ENCODE measurements at regions of chr7 and their contacts with region 1.

Region 1: GRCh38 chr7:1569833-1570633 is at the start of gene PSMG3:
- DNase-seq: peak; percentile 88
- ATAC-seq: peak; percentile 61
- H3K4me3 ChIP-seq: peak within 1 kb of the TSS; percentile 75
- H3K27ac ChIP-seq: peak within 1 kb of the TSS; percentile 99
- H3K4me1 ChIP-seq: peaks cover 42% of the 10 kb centered on the region
- H3K27me3 ChIP-seq: no peaks in the 10 kb centered on the region
- CTCF ChIP-seq: peak; percentile 31; the same call in 1 of the 2 replicates
- total RNA-seq, gene PSMG3: 133 and 171 TPM in 2 replicates

Region 2: DNA sequence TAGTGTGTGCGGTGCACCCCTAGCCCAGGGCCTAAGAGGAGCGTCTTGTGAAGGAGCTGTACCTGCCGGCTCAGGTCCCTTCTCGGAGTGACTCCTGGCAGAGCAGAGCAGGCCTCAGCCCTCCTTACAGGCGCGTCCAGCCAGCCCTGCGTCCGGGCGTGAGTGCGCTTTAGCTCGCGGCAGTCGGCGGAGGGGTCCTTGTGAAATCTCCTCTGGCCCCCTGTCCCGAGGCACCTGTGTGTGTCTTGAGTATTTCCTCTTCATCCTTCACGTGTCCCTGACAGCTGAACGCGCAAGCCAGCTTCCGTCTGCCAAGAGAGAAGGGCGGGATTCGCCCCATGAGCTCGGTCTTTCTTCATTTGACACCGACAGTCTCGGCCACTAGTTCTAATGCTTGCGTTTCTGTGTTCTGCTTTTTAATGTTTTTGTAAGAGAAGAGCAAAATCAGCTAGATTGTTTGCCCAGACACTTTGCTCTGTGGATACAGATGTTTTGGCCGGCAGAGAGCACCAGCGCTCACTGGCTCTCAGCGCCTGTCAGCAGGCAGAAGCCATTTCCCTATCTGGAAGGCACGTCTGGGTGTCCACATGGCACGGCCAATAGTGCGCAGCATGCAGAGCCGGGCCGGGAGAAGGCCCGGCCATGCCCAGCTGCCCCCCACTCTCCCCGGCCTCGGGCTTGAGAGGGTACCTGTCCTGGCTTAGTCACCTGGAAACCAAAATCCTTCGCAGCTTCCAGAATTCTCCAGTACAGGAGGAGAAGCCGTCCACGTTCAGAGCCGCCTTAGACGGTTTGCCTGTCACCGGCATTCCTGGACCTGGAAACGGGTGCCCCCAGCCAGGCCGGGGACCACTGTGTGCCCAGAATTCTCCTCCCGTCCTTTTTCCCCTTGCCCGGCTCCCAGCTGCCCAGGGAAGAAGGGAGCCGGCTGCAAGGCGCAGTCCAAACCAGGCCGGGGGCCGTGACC is 686.7 kb before region 1 on chr7:
- CTCF ChIA-PET with region 1: no interaction called
- POLR2A ChIA-PET with region 1: no interaction called
- intact Hi-C with region 1: no loop called
- DNase-seq: no peak
- ATAC-seq: no peak
- H3K4me3 ChIP-seq: no peak overlapping the region
- H3K27ac ChIP-seq: no peak overlapping the region
- H3K4me1 ChIP-seq: peaks cover 15% of the 10 kb centered on the region
- H3K27me3 ChIP-seq: no peaks in the 10 kb centered on the region
- CTCF ChIP-seq: no peak

Region 3: DNA sequence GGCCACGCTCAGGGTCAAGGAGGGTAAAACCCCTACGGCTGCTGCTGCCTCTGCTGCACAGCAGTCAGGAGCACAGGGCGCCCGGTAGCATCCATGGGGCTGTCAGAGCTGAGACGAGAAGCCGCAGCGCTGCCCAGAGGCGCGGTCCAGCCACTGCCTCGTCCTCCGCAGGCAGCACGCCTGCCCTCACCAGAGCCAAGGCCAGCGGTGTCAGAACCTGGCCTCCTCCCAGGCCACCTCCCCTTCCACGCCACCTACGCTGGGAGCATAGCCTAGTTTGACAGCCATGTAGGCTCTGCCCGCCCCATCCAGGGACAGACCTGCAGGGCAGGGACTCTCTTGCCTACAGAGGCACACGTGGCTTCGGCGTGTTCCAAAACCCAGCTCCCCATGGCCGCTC is 82.0 kb before region 1 on chr7:
- CTCF ChIA-PET with region 1: no interaction called
- POLR2A ChIA-PET with region 1: no interaction called
- intact Hi-C with region 1: no loop called
- DNase-seq: no peak
- ATAC-seq: no peak
- H3K4me3 ChIP-seq: no peak overlapping the region
- H3K27ac ChIP-seq: no peak overlapping the region
- H3K4me1 ChIP-seq: no peaks in the 10 kb centered on the region
- H3K27me3 ChIP-seq: no peaks in the 10 kb centered on the region
- CTCF ChIP-seq: no peak

Region 4: DNA sequence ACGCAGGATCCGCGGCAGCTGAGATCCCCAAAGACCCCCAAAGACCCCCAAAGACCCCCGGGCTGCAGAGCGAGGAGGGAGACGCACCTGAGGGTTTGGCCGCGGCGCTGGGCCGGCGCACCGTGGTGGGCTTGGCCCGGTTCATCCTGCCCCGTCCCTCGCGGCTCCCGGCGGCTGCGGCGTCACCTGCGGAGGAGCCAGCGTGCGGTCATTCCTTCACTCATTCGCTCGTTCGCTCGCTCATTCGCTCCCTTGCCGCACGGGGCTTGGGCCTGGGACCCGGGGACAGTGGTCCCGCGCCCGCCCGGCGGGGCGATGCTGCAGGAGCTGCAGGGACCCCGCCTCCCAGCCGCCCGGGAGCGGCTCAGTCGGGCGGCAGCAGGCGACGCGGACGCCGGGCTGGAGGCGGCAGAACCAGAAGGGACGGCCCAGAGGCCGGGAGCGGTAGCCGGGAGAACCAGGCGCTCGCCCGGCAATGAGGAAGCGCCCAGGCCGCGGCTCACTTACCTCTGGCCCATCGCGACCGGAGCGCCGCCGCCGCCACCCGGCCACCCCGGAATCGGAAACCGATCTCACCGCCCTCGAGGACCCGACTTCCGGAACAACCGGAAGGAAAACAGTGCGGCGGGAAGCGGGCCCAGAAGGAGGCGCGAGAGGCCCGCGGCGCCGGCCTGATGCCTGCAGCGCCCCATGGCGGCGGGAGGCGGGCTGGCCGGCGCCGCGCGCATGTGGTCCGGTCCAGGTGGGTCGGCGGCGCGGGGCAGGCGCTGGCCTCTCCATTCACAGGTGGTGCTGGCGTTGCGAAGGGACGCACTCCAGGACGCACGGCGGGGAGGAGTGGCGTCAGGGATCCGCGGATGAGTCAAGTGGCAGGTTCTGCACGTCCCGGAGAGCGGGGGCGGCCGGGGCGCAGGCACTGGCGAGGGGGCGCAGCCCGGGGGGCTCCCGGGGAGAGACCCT is 65.9 kb before region 1 on chr7 and contains the start of gene INTS1:
- CTCF ChIA-PET with region 1: no interaction called
- POLR2A ChIA-PET with region 1: no interaction called
- intact Hi-C with region 1: loop called (anchors 1 kb)
- DNase-seq: peak; percentile 95
- ATAC-seq: peak; percentile 93
- H3K4me3 ChIP-seq: peak within 1 kb of the TSS; percentile 97
- H3K27ac ChIP-seq: peak within 1 kb of the TSS; percentile 20; the same call in 1 of the 2 replicates
- H3K4me1 ChIP-seq: peaks cover 16% of the 10 kb centered on the region
- H3K27me3 ChIP-seq: no peaks in the 10 kb centered on the region
- CTCF ChIP-seq: peak; percentile 78
- total RNA-seq, gene INTS1: 62.9 and 92.6 TPM in 2 replicates

Region 5: GRCh38 chr7:1532483-1533424 is 37.3 kb before region 1 on chr7:
- CTCF ChIA-PET with region 1: no interaction called
- POLR2A ChIA-PET with region 1: interaction called, 3 read pairs
- intact Hi-C with region 1: loop called (anchors 1 kb)
- DNase-seq: peak; percentile 97
- ATAC-seq: peak; percentile 52
- H3K4me3 ChIP-seq: peak overlapping the region; percentile 88
- H3K27ac ChIP-seq: peak overlapping the region; percentile 97
- H3K4me1 ChIP-seq: peaks cover 32% of the 10 kb centered on the region
- H3K27me3 ChIP-seq: no peaks in the 10 kb centered on the region
- CTCF ChIP-seq: no peak

Region 6: GRCh38 chr7:2354186-2354938 is 784.3 kb after region 1 on chr7 and contains the start of gene EIF3B:
- CTCF ChIA-PET with region 1: no interaction called
- POLR2A ChIA-PET with region 1: interaction called, 3 read pairs
- intact Hi-C with region 1: loop called (anchors 10 kb)
- DNase-seq: peak; percentile 85
- ATAC-seq: peak; percentile 87
- H3K4me3 ChIP-seq: peak within 1 kb of the TSS; percentile 99
- H3K27ac ChIP-seq: peak within 1 kb of the TSS; percentile 94
- H3K4me1 ChIP-seq: peaks cover 25% of the 10 kb centered on the region
- H3K27me3 ChIP-seq: no peaks in the 10 kb centered on the region
- CTCF ChIP-seq: no peak
- total RNA-seq, gene EIF3B: 289 and 377 TPM in 2 replicates

Measured in PC-3 (cell line).